ENCODE measurements at regions of chr16 and their contacts with region 1.

Region 1: DNA sequence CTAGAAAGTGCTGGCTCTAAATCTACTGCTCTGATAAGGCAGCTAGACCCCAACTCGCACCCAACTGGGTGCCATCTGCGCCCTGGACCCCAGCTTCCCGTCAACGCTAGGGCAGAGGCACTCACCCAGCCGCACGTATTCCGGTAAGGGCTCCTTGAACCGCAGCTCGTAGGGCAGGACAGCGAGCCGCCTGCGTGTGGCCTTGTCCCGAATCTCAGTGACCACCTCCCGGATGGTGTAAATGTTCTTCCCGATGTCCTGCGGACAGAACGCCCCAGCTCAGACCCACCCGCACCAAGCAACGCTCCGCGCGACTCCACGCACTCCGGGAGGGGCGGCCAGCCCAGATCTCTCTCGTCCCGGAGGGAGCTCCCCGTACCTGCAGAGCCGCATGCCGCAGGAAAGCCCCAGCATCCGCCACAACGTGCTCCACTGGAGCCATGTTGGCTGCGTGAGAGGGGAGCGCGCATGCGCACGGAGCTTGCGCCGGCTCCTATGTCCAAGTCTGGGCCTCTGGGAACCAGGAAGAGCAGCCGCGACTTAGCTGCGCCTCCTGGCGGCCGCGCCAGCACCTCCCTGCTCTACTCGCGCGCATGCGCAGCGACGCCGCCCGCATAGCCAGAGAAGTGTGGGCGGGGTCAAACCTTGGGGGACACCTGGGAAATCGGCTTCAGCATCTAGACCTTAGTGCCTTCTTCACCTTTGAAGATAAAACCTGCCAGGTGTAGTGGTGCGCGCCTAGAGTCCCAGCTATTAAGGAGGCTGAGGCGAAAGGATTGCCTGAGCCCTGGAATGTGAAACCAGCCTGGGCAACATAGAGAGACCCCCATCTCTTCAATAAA is at the start of gene NOB1:
- DNase-seq: peak; percentile 98 to 99
- H3K4me3 ChIP-seq: peak within 1 kb of the TSS; percentile 74
- H3K4me3 Mint-ChIP-seq: peak within 1 kb of the TSS; percentile 96
- H3K27ac Mint-ChIP-seq: peak within 1 kb of the TSS; percentile 99
- H3K4me1 ChIP-seq: peaks cover 9% of the 10 kb centered on the region
- H3K4me1 Mint-ChIP-seq: peaks cover 9% of the 10 kb centered on the region
- H3K27me3 ChIP-seq: no peaks in the 10 kb centered on the region
- H3K27me3 Mint-ChIP-seq: peaks cover 2% of the 10 kb centered on the region
- CTCF ChIP-seq: peak; percentile 96 to 99
- total RNA-seq, gene NOB1: 115 and 120 TPM in 2 replicates

Region 2: GRCh38 chr16:69579783-69580481 is 174.8 kb before region 1 on chr16:
- CTCF ChIA-PET with region 1: no interaction called
- POLR2A ChIA-PET with region 1: no interaction called
- intact Hi-C with region 1: no loop called
- DNase-seq: no peak
- H3K4me3 ChIP-seq: no peak overlapping the region
- H3K4me3 Mint-ChIP-seq: no peak overlapping the region
- H3K27ac Mint-ChIP-seq: no peak overlapping the region
- H3K4me1 ChIP-seq: peaks cover 13% of the 10 kb centered on the region; the same call in 1 of the 2 replicates
- H3K4me1 Mint-ChIP-seq: peaks cover 16% of the 10 kb centered on the region
- H3K27me3 ChIP-seq: no peaks in the 10 kb centered on the region
- H3K27me3 Mint-ChIP-seq: no peaks in the 10 kb centered on the region
- CTCF ChIP-seq: no peak

Region 3: DNA sequence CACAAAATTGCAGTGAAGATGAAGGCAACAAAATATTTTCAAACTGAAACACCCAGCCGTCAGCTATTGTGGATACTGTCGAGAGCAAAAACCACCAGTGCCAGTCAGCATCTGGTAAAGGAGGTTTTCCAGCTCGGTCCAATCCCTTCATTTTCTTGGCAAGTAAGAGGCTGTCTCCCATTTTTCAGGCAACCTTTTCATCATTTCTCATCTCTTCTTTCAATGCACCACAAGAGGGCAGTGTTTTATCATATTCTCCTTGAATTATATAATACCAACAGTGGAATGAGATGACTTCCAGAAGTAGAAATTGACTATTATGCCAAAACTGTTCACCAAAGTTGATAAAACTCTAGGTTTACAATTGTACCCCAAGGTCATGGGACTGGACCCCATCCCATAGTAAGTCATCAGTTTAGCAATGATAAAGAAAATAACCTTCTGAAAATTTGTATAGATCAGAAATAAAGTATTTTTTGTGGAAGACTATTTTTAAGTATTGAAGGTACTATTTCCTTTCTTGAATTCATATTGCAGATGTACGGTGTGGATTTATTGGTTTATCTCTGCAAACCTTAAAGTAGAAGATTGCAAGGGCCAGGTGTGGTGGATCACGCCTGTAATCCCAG is 45.1 kb before region 1 on chr16:
- CTCF ChIA-PET with region 1: interaction called, 12 read pairs
- POLR2A ChIA-PET with region 1: interaction called, 3 read pairs
- intact Hi-C with region 1: loop called (anchors 1 kb)
- DNase-seq: peak in 1 of 2 experiments; percentile 62
- H3K4me3 ChIP-seq: no peak overlapping the region
- H3K4me3 Mint-ChIP-seq: no peak overlapping the region
- H3K27ac Mint-ChIP-seq: no peak overlapping the region
- H3K4me1 ChIP-seq: peaks cover 7% of the 10 kb centered on the region
- H3K4me1 Mint-ChIP-seq: peaks cover 13% of the 10 kb centered on the region
- H3K27me3 ChIP-seq: no peaks in the 10 kb centered on the region
- H3K27me3 Mint-ChIP-seq: no peaks in the 10 kb centered on the region
- CTCF ChIP-seq: peak; percentile 67 to 82